Panc1 (cell line): ENCODE measurements at regions of chr2 and their contacts with region 1.

Region 1: GRCh38 chr2:2922156-2922555 is 455.5 kb downstream of the EIPR1 start:
- DNase-seq: no peak
- ATAC-seq: no peak
- H3K4me3 ChIP-seq: no peak overlapping the region
- H3K27ac ChIP-seq: no peak overlapping the region
- H3K4me1 ChIP-seq: no peaks in the 10 kb centered on the region
- H3K27me3 ChIP-seq: no peaks in the 10 kb centered on the region; the same call in 1 of the 2 replicates
- CTCF ChIP-seq: no peak

Region 2: DNA sequence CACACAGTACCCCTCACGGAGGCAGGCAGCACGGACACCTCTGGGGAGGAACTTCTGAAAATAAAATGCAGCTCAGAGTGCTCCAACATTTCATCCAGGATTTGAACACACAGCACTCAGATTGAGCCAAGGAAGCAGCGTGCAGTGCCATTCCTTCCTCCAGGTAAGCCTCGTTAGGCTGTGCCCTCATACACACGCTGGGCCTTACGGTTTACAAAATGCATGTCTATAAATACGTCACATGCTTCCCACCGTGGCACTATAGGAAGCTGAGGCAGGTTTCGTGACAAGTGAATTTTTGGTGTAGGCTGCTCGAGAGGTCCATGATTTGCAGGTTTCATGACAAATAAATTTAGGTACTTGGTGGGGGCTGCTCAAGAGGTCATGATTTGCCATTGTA is 722.3 kb before region 1 on chr2:
- CTCF ChIA-PET with region 1: no interaction called
- POLR2A ChIA-PET with region 1: no interaction called
- in situ Hi-C with region 1: no loop called
- intact Hi-C with region 1: no loop called
- DNase-seq: no peak
- ATAC-seq: no peak
- H3K4me3 ChIP-seq: no peak overlapping the region
- H3K27ac ChIP-seq: no peak overlapping the region
- H3K4me1 ChIP-seq: no peaks in the 10 kb centered on the region
- H3K27me3 ChIP-seq: no peaks in the 10 kb centered on the region
- CTCF ChIP-seq: no peak

Region 3: GRCh38 chr2:2960441-2961186 is 38.5 kb after region 1 on chr2:
- CTCF ChIA-PET with region 1: no interaction called
- POLR2A ChIA-PET with region 1: no interaction called
- in situ Hi-C with region 1: no loop called
- intact Hi-C with region 1: loop called (anchors 1 kb)
- DNase-seq: no peak
- ATAC-seq: no peak
- H3K4me3 ChIP-seq: no peak overlapping the region
- H3K27ac ChIP-seq: no peak overlapping the region
- H3K4me1 ChIP-seq: no peaks in the 10 kb centered on the region
- H3K27me3 ChIP-seq: no peaks in the 10 kb centered on the region
- CTCF ChIP-seq: no peak